OCI-LY7 (cell line): ENCODE measurements at regions of chr3 and their contacts with region 1.

Region 1: DNA sequence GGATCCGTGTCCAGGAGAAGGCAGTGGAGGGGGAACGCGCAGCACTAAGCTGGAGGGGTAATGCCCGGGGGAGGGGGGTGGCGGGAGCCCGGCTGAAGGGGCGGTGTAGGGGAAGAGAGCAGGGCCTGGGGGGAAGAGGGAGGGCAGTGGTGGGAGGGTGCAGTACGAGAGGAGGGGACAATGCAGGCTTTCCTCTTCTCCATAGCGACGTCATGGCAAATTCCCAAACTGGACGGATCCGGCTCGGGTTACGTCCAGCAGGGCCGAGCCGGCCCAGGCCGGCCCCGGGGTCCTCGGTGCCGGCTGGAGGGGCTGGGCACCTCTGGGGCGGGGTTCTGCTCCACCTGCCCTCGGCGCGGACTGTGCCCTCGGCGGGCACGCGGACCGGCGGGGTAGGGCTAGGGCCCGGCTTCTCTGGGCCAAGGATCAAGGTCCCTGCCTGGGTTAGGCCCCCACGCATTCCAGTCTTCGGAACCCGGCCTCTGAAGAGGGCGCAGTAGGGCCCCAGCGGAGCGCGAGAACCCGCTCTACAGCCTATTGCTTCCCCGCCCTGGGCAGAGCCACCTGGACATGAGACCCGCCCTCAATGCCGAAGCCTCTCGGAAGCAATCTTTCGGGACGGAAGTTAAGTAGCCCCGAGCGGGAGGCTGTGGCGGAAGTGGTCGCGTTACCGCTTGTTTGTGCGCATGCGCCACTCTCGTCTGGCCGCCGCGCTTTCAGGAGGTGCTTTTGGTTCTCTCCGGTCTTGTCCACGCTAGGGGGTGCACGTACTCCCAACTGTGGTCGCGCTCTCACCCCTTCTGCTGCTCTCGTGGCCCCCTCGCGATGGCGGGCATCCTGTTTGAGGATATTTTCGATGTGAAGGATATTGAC is 1.4 kb downstream of the POLR2H start:
- DNase-seq: peak; percentile 99
- H3K4me3 ChIP-seq: peak overlapping the region; percentile 97
- H3K27ac ChIP-seq: peak overlapping the region; percentile 55
- H3K4me1 ChIP-seq: peaks cover 23% of the 10 kb centered on the region
- CTCF ChIP-seq: peak; percentile 76

Region 2: DNA sequence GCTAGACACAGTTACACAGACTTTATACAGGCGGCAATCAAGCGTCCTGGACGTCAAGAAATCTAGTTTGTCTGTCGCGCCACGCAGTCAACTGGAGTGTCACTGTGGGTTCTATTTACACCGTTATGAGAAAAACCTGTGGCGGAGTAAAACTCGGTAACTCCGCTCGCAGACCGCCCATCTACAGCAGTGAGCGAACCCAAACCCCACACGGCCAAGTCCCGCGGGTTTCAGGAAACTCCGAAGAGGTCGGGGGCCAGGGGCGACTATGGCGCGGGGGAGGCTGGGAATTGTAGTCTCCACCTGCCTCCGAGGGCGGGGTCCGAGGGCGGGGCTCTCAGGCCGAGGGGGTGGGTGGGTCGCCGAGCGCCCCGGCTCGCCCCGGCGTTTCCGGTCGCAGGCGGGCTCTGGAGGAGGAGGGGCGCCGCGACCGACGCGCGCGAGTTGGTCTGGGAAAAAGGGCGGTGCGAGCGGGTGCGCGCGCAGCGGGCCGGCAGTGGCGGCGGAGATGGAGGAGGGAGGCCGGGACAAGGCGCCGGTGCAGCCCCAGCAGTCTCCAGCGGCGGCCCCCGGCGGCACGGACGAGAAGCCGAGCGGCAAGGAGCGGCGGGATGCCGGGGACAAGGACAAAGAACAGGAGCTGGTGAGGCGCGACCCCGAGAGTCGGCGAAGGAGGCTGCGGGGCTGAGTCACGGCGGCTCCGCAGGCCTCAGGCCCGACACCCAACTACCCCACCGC is 64.0 kb before region 1 on chr3 and contains the start of gene PSMD2:
- CTCF ChIA-PET with region 1: no interaction called
- POLR2A ChIA-PET with region 1: interaction called, 4 read pairs
- intact Hi-C with region 1: loop called (anchors 1 kb)
- DNase-seq: peak; percentile 97
- H3K4me3 ChIP-seq: peak within 1 kb of the TSS; percentile 96
- H3K27ac ChIP-seq: peak within 1 kb of the TSS; percentile 24
- H3K4me1 ChIP-seq: peaks cover 12% of the 10 kb centered on the region
- CTCF ChIP-seq: no peak
- total RNA-seq, gene PSMD2: 158 and 205 TPM in 2 replicates